ENCODE measurements at regions of chr13 and their contacts with region 1.

Region 1: GRCh38 chr13:45340422-45340925 is 509 bp downstream of the TPT1 start:
- DNase-seq: peak; percentile 87
- H3K4me3 Mint-ChIP-seq: peak overlapping the region; percentile 90
- H3K27ac Mint-ChIP-seq: peak overlapping the region; percentile 99
- H3K4me1 Mint-ChIP-seq: peaks cover 57% of the 10 kb centered on the region
- H3K27me3 Mint-ChIP-seq: no peaks in the 10 kb centered on the region

Region 2: DNA sequence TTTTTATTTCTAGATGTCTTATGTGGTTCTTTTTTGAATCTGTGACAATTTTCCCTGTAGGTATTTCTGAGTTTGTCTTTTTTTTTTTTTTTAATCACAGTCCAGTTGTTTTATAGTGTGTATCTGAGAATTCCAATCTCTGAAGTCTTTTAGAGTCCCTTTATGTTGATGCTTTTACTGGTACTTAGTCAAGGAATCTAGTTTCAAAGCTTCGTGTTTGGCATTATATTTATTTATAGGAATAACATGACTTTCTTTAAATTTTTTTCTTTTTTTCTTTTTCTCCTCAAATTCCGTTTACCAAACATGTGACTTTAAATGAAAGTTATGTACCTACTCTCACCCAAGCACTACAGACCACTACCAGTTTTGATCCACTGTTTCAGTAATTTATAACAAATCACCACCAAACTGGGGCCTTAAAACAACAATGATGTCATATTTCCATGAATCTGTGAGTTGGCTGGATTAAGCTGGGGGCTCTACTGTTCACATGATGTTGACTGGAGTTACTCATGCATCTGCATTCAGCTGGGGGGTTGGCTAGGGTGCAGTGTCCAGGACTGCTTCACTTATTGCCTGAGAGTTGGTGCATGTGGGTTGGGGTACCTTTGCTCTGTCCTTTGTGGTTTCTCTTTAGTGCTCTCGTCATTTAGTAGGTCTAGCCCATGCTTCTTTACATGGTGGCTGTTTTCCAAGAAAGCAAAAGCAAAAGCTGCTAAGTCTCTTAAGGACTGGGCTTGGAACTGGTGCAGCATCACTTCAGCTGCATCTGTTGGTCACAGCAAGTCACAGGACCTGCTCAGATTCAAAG is 161.9 kb before region 1 on chr13:
- CTCF ChIA-PET with region 1: no interaction called
- POLR2A ChIA-PET with region 1: no interaction called
- DNase-seq: no peak
- H3K4me3 Mint-ChIP-seq: no peak overlapping the region
- H3K27ac Mint-ChIP-seq: no peak overlapping the region
- H3K4me1 Mint-ChIP-seq: peaks cover 22% of the 10 kb centered on the region
- H3K27me3 Mint-ChIP-seq: no peaks in the 10 kb centered on the region

Region 3: DNA sequence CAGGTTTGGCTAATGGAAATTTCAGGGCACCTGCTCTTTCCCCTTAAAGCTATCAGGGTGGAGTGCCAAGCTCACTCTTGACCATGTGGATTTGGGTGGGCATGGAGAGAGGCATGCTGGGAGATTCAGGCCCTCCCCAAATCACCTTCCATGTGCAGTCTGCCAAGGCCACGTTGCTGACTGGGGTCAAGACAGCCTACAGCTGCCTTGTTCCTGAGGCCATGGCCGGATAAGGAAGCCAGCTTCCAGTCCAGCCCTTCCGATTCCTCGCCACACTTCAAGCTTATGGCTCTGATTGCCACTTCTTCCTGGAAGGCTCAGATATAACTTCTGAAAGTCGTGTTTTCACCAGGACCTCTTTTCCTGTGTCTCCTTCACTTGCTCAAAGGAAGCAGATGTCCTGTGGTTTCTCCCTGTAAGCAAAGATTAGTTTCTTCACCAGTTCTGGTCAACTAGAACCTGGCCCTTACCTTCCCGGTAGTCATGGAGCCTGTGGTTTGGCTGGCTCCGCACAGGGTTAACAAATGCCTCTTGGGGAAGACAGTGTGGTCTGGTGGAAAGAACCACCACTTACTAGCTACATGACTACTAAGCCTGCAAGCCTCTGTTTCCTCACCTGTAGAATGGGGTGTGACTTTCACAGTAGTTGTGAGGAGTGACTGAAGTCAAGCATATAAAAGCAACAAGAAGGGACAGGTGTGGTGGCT is 16.6 kb after region 1 on chr13:
- CTCF ChIA-PET with region 1: interaction called, 9 read pairs
- POLR2A ChIA-PET with region 1: interaction called, 31 read pairs
- DNase-seq: no peak
- H3K4me3 Mint-ChIP-seq: no peak overlapping the region
- H3K27ac Mint-ChIP-seq: peak overlapping the region; percentile 72
- H3K4me1 Mint-ChIP-seq: peaks cover 41% of the 10 kb centered on the region
- H3K27me3 Mint-ChIP-seq: no peaks in the 10 kb centered on the region

Region 4: DNA sequence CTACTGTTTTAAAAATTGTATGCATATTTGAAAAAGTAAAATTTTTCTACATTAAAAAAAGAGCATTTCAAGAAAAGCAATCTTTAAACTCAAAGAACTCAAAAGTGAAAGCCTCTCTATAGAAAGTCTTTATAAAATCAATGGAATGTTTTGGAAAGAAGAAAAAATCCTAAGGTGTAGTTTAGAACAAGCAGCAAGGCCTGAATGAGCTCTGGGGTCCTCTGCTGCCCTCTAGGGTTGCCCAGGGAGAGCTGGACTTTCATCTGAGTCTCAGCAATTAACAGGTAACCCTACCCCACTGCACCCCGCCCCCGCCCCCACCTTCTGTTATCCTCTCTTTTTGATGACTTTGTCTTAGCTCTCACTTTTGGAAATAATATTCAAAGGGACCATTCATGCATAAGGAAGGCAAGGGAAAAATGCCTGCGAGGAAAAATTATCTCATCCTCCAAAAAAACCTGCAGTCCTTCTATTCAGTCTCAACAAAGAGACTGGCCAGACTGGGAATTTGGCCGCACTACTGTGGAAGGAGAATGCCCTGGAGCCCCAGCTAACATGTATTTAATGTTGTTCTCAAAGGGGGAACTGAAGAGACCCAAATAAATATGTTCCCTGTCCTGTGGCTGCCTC is 53.6 kb after region 1 on chr13:
- CTCF ChIA-PET with region 1: interaction called, 6 read pairs
- POLR2A ChIA-PET with region 1: interaction called, 24 read pairs
- DNase-seq: peak; percentile 26
- H3K4me3 Mint-ChIP-seq: no peak overlapping the region
- H3K27ac Mint-ChIP-seq: no peak overlapping the region
- H3K4me1 Mint-ChIP-seq: peaks cover 48% of the 10 kb centered on the region
- H3K27me3 Mint-ChIP-seq: no peaks in the 10 kb centered on the region